Activated CD4-positive, alpha-beta T cell treated with anti-CD3 and anti-CD28 coated beads for 36 hours (primary cell): ENCODE measurements at regions of chr16 and their contacts with region 1.

Region 1: GRCh38 chr16:23826528-23827045 is 9.2 kb upstream of the PRKCB start:
- DNase-seq: no peak
- ATAC-seq: peak; percentile 40
- H3K4me3 Mint-ChIP-seq: peak overlapping the region; percentile 40
- H3K27ac Mint-ChIP-seq: peak overlapping the region; percentile 83
- H3K4me1 Mint-ChIP-seq: peaks cover 31% of the 10 kb centered on the region
- H3K27me3 Mint-ChIP-seq: no peaks in the 10 kb centered on the region

Region 2: GRCh38 chr16:23670137-23670776 is 156.3 kb before region 1 on chr16:
- CTCF ChIA-PET with region 1: no interaction called
- POLR2A ChIA-PET with region 1: no interaction called
- intact Hi-C with region 1: loop called in 1 of 2 experiments (anchors 2 kb)
- DNase-seq: peak; percentile 84
- ATAC-seq: peak; percentile 98
- H3K4me3 Mint-ChIP-seq: no peak overlapping the region
- H3K27ac Mint-ChIP-seq: peak overlapping the region; percentile 16
- H3K4me1 Mint-ChIP-seq: peaks cover 20% of the 10 kb centered on the region
- H3K27me3 Mint-ChIP-seq: no peaks in the 10 kb centered on the region

Region 3: GRCh38 chr16:23842137-23842600 is 15.6 kb after region 1 on chr16:
- CTCF ChIA-PET with region 1: interaction called, 5 read pairs
- POLR2A ChIA-PET with region 1: no interaction called
- intact Hi-C with region 1: loop called (anchors 1 kb)
- DNase-seq: peak; percentile 67
- ATAC-seq: peak; percentile 91
- H3K4me3 Mint-ChIP-seq: no peak overlapping the region
- H3K27ac Mint-ChIP-seq: peak overlapping the region; percentile 85
- H3K4me1 Mint-ChIP-seq: peaks cover 83% of the 10 kb centered on the region
- H3K27me3 Mint-ChIP-seq: no peaks in the 10 kb centered on the region

Region 4: DNA sequence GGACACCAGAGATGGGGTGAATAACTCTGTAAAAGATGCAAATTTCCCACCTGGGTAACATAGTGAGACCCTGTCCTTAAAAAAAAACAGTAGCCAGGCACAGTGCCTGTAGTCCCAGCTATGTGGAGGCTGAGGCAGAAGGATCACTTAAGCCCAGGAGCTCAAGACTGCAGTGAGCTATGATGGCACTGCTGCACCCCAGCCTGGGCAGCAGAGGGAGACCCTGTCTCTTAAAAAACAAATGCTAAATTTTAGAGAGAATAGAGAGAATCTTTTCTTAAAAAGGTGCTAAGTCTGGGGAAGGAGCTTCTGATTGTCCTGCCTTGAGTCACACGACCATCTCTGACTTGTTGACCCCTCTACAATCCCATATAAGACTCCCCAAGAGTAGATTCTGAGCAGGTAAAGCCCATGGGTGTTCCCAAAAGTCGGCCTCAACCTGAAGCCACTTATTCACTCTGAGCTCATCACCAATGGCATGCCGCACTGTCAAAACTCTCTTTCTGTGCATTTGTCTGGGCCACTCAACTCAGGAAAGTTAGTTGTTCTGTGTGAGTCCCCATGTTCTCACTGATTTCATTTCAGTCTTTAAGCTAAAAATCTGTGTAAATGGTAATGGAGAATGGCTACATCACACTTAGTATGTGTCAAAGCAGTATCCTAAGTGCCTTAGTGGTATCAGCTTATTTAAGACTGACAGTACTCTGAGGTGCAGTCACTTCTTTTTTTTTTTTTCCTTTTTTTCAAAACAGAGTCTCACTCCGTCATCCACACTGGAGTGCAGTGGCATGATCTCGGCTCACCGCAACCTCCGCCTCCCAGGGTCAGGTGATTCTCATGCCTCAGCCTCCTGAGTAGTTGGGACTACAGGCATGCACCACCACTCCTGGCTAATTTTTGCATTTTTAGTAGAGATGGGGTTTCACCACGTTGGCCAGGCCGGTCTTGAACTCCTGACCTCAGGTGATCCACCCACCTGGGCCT is 50.8 kb after region 1 on chr16:
- CTCF ChIA-PET with region 1: interaction called, 3 read pairs
- POLR2A ChIA-PET with region 1: no interaction called
- intact Hi-C with region 1: loop called in 1 of 2 experiments (anchors 1 kb)
- DNase-seq: peak; percentile 52
- ATAC-seq: peak; percentile 73
- H3K4me3 Mint-ChIP-seq: no peak overlapping the region
- H3K27ac Mint-ChIP-seq: peak overlapping the region; percentile 55
- H3K4me1 Mint-ChIP-seq: peaks cover 75% of the 10 kb centered on the region
- H3K27me3 Mint-ChIP-seq: no peaks in the 10 kb centered on the region

Region 5: GRCh38 chr16:23959072-23959751 is 132.6 kb after region 1 on chr16:
- CTCF ChIA-PET with region 1: interaction called, 4 read pairs
- POLR2A ChIA-PET with region 1: no interaction called
- intact Hi-C with region 1: loop called (anchors 1 to 5 kb)
- DNase-seq: no peak
- ATAC-seq: peak; percentile 49
- H3K4me3 Mint-ChIP-seq: peak overlapping the region; percentile 54
- H3K27ac Mint-ChIP-seq: peak overlapping the region; percentile 79
- H3K4me1 Mint-ChIP-seq: peaks cover 77% of the 10 kb centered on the region
- H3K27me3 Mint-ChIP-seq: no peaks in the 10 kb centered on the region

Region 6: GRCh38 chr16:24062270-24062817 is 235.8 kb after region 1 on chr16:
- CTCF ChIA-PET with region 1: no interaction called
- POLR2A ChIA-PET with region 1: no interaction called
- intact Hi-C with region 1: no loop called
- DNase-seq: no peak
- ATAC-seq: no peak
- H3K4me3 Mint-ChIP-seq: no peak overlapping the region
- H3K27ac Mint-ChIP-seq: no peak overlapping the region
- H3K4me1 Mint-ChIP-seq: no peaks in the 10 kb centered on the region
- H3K27me3 Mint-ChIP-seq: no peaks in the 10 kb centered on the region

Region 7: GRCh38 chr16:24189941-24190340 is 363.4 kb after region 1 on chr16:
- CTCF ChIA-PET with region 1: no interaction called
- POLR2A ChIA-PET with region 1: no interaction called
- intact Hi-C with region 1: loop called in 1 of 2 experiments (anchors 5 kb)
- DNase-seq: peak; percentile 22
- ATAC-seq: peak; percentile 77
- H3K4me3 Mint-ChIP-seq: no peak overlapping the region
- H3K27ac Mint-ChIP-seq: peak overlapping the region; percentile 85
- H3K4me1 Mint-ChIP-seq: peaks cover 37% of the 10 kb centered on the region
- H3K27me3 Mint-ChIP-seq: no peaks in the 10 kb centered on the region